ENCODE measurements at regions of chr15 and their contacts with region 1.

Region 1: GRCh38 chr15:55649054-55649423 is 60.9 kb upstream of the PYGO1 start:
- DNase-seq: peak; percentile 57
- ATAC-seq: peak; percentile 77
- H3K4me3 ChIP-seq: no peak overlapping the region
- H3K27ac ChIP-seq: no peak overlapping the region
- H3K4me1 ChIP-seq: no peaks in the 10 kb centered on the region; the same call in 1 of the 2 replicates
- H3K27me3 ChIP-seq: no peaks in the 10 kb centered on the region
- CTCF ChIP-seq: no peak

Region 2: DNA sequence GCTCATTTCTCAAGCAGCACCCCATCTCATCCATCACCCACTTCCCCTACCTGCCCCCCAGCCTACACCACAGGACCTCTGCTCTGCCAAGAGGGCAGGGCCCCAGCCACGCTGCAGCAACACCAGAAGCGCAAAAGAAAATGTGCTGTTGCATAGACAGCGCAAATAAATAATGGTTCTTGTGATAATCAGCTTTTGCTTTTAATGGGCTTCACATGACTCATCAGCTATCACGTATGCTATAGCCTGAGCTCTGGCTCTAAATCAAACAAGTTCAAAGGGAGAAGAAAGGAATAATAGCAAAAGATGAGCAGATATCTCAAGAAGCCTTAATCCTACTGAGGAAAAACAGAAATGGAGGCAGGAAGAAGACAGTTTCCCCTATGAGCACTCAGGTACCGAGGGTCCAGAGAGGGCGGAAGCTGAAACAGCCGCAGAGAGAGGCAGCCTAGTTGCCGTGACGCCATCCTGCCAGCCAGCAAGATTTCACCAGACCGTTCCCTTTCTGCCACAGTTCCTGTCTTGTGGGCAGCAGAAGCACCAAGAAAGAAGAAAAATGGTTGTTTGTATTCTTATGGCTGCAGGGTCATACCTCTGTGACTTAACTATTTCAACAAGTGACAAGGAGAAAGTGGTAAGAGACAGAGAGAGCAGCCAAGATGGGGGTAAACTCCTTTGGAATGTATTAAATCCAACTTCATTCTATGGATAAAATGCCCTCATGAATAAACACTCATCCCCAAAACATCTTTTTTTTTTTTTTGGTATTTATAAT is 381.5 kb before region 1 on chr15:
- CTCF ChIA-PET with region 1: no interaction called
- POLR2A ChIA-PET with region 1: no interaction called
- intact Hi-C with region 1: no loop called
- DNase-seq: no peak
- ATAC-seq: no peak
- H3K4me3 ChIP-seq: no peak overlapping the region
- H3K27ac ChIP-seq: no peak overlapping the region
- H3K4me1 ChIP-seq: no peaks in the 10 kb centered on the region
- H3K27me3 ChIP-seq: no peaks in the 10 kb centered on the region
- CTCF ChIP-seq: no peak

Region 3: DNA sequence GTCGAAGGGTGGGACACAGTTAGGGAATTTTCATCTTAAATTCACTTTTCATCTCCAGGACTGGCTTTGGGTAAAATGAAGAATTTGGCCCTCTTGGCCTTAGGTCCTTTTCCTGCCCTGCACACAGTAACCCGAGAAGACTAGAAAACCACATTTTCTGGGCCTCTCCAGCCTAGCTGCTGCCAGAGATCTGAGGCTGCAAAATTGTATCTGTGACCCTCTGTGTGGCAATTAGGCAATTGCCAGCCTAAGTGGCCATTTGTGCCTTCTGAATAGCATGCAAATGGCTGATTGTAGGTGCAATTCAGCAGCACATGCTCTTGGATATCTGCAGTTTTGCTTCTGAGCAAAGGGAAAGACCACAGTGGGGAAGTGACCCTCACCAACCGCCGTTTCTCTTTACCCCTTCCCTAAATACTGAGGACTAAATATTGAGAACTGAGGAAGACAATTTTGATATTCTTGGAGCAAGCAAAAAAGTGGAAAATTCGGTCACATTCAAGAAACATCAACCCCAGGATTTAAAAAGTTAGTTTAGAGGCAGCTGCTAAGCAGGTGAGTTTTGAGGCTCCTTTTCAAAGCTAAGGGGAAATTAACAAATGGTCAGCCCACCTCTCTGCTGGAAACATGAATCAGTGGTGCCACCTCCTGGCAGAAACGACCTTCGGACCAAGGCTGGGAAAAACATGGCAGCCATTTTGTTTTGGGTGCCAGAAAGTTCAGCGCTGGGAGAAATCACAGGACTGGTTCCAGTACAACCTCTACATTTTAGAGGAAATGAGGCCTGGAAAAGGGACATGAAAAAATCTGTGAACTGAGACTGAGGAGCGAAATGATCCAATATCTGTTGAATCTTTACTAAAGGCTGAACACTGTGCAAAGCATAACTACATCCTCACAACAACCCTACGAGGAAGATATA is 150.5 kb after region 1 on chr15:
- CTCF ChIA-PET with region 1: no interaction called
- POLR2A ChIA-PET with region 1: no interaction called
- intact Hi-C with region 1: loop called (anchors 1 kb)
- DNase-seq: peak; percentile 43
- ATAC-seq: no peak
- H3K4me3 ChIP-seq: no peak overlapping the region
- H3K27ac ChIP-seq: no peak overlapping the region
- H3K4me1 ChIP-seq: no peaks in the 10 kb centered on the region; the same call in 1 of the 2 replicates
- H3K27me3 ChIP-seq: no peaks in the 10 kb centered on the region
- CTCF ChIP-seq: peak; percentile 73

Region 4: GRCh38 chr15:55846116-55846707 is 197.2 kb after region 1 on chr15:
- CTCF ChIA-PET with region 1: no interaction called
- POLR2A ChIA-PET with region 1: no interaction called
- intact Hi-C with region 1: loop called (anchors 1 kb)
- DNase-seq: peak; percentile 84
- ATAC-seq: peak; percentile 58; the same call in 1 of the 2 replicates
- H3K4me3 ChIP-seq: no peak overlapping the region
- H3K27ac ChIP-seq: no peak overlapping the region
- H3K4me1 ChIP-seq: no peaks in the 10 kb centered on the region
- H3K27me3 ChIP-seq: no peaks in the 10 kb centered on the region
- CTCF ChIP-seq: peak; percentile 83

Region 5: GRCh38 chr15:56052395-56053045 is 403.5 kb after region 1 on chr15:
- CTCF ChIA-PET with region 1: no interaction called
- POLR2A ChIA-PET with region 1: no interaction called
- intact Hi-C with region 1: loop called (anchors 10 kb)
- DNase-seq: peak; percentile 67
- ATAC-seq: peak; percentile 64
- H3K4me3 ChIP-seq: no peak overlapping the region
- H3K27ac ChIP-seq: no peak overlapping the region
- H3K4me1 ChIP-seq: peaks cover 1% of the 10 kb centered on the region; the same call in 1 of the 2 replicates
- H3K27me3 ChIP-seq: no peaks in the 10 kb centered on the region
- CTCF ChIP-seq: peak; percentile 76